Activated CD4-positive, alpha-beta T cell treated with anti-CD3 and anti-CD28 coated beads, Interleukin-2, amount 10 ng/mL, durations not matched to agents 24 days and 14 days (primary cell): ENCODE measurements at regions of chr7 and their contacts with region 1.

Region 1: GRCh38 chr7:150737265-150738055 is at the start of gene GIMAP5:
- DNase-seq: peak; percentile 89
- H3K4me3 Mint-ChIP-seq: peak within 1 kb of the TSS; percentile 89
- H3K27ac Mint-ChIP-seq: peak within 1 kb of the TSS; percentile 94
- H3K4me1 Mint-ChIP-seq: peaks cover 69% of the 10 kb centered on the region
- H3K27me3 Mint-ChIP-seq: no peaks in the 10 kb centered on the region
- total RNA-seq, gene GIMAP5: 44.4 and 50.9 TPM in 2 replicates

Region 2: DNA sequence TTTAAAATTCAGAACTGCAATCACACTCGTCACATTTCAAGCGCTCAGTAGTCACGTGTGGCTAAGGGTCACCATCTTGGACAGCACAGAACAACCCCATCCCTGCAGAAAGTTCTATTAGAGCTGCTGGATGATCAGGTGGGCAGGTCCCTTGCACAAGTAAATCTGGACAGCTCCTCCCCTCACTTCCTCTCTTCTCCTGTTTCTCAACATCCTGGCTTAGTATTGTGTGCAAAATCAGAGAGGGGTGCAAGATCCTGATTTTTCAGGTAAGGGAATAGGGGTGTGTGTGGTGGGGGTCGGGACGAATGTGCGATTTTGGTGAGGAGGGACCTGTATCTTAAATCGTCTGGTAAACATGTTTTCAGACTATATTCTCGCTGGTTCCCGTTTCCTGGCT is 170.3 kb before region 1 on chr7 and contains the start of gene GIMAP4:
- intact Hi-C with region 1: loop called (anchors 2 kb)
- DNase-seq: peak; percentile 77
- H3K4me3 Mint-ChIP-seq: peak within 1 kb of the TSS; percentile 86
- H3K27ac Mint-ChIP-seq: peak within 1 kb of the TSS; percentile 95
- H3K4me1 Mint-ChIP-seq: peaks cover 59% of the 10 kb centered on the region
- H3K27me3 Mint-ChIP-seq: no peaks in the 10 kb centered on the region
- total RNA-seq, gene GIMAP4: 61.1 and 62.7 TPM in 2 replicates

Region 3: GRCh38 chr7:150631866-150632864 is 105.3 kb before region 1 on chr7 and contains the start of gene GIMAP6:
- intact Hi-C with region 1: loop called (anchors 5 kb)
- DNase-seq: peak; percentile 85
- H3K4me3 Mint-ChIP-seq: peak within 1 kb of the TSS; percentile 93
- H3K27ac Mint-ChIP-seq: peak within 1 kb of the TSS; percentile 92
- H3K4me1 Mint-ChIP-seq: peaks cover 62% of the 10 kb centered on the region
- H3K27me3 Mint-ChIP-seq: no peaks in the 10 kb centered on the region
- total RNA-seq, gene GIMAP6: 35.5 and 35.8 TPM in 2 replicates

Region 4: GRCh38 chr7:150685219-150686029 is 52.0 kb before region 1 on chr7 and contains the start of gene GIMAP2:
- intact Hi-C with region 1: loop called (anchors 2 kb)
- DNase-seq: peak; percentile 83
- H3K4me3 Mint-ChIP-seq: peak within 1 kb of the TSS; percentile 98
- H3K27ac Mint-ChIP-seq: peak within 1 kb of the TSS; percentile 99
- H3K4me1 Mint-ChIP-seq: peaks cover 65% of the 10 kb centered on the region
- H3K27me3 Mint-ChIP-seq: no peaks in the 10 kb centered on the region
- total RNA-seq, gene GIMAP2: 28.2 TPM in 2 replicates

Region 5: DNA sequence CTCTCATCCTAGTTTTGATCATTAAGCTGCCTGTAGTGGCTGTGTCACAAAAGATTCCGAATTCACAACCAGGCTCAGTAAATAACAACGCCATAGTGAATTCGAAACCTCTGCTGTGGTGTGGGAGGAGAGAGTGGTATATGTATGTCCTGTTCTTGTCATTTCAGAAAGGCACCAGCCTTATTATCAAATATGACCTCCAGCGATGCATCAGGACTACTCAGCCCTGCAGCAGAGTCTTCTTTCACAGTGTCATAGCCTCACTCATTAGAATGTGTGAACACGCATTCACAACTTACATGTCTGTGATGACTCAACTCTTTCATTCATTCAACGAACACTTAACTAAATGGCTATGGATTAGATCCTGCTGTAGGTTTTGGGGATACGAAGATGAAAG is 130.1 kb after region 1 on chr7:
- intact Hi-C with region 1: no loop called
- DNase-seq: peak; percentile 40
- H3K4me3 Mint-ChIP-seq: no peak overlapping the region
- H3K27ac Mint-ChIP-seq: no peak overlapping the region
- H3K4me1 Mint-ChIP-seq: no peaks in the 10 kb centered on the region
- H3K27me3 Mint-ChIP-seq: peaks cover 19% of the 10 kb centered on the region

Region 6: DNA sequence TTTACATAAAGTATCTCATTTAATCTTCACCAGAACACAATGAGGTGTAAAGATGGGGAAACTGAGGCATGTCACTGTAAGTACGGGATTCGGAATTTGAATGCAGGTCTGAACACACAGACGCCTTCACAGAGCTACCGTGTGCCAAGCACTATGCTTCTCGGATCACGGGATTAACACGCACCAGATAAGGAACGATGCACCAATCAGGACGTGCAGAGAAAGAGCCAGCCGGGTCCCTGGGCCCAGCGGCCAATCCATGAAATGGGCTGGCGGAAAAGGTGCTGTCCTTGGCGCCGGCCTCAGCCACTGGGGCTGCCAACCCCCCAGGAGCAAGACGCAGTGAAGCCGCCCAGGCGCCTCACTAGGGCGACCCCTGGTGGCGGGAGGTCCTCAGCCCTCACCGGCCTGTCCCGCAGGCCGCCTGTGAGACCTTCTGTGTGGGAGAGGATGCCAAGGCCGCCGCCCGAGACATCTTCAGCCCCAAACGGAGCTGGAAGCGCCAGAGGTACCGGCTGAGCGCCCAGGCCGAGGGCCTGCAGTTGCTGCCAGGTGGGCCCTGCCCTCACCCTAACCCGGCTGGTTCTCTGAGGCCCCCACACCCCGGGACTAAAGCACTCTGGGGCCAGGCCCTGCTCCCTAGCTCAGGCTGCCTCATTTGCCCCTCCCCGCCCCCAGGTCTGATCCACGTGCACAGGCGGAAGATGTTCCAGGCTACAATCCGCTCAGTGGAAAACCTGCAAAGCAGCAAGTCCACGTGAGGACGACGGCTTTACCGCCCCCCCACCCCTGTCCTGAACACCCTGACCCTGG is 271.3 kb after region 1 on chr7:
- intact Hi-C with region 1: no loop called
- DNase-seq: peak; percentile 92
- H3K4me3 Mint-ChIP-seq: peak overlapping the region; percentile 84
- H3K27ac Mint-ChIP-seq: peak overlapping the region; percentile 90
- H3K4me1 Mint-ChIP-seq: peaks cover 46% of the 10 kb centered on the region
- H3K27me3 Mint-ChIP-seq: no peaks in the 10 kb centered on the region